Calu3 (cell line): ENCODE measurements at regions of chr6 and their contacts with region 1.

Region 1: DNA sequence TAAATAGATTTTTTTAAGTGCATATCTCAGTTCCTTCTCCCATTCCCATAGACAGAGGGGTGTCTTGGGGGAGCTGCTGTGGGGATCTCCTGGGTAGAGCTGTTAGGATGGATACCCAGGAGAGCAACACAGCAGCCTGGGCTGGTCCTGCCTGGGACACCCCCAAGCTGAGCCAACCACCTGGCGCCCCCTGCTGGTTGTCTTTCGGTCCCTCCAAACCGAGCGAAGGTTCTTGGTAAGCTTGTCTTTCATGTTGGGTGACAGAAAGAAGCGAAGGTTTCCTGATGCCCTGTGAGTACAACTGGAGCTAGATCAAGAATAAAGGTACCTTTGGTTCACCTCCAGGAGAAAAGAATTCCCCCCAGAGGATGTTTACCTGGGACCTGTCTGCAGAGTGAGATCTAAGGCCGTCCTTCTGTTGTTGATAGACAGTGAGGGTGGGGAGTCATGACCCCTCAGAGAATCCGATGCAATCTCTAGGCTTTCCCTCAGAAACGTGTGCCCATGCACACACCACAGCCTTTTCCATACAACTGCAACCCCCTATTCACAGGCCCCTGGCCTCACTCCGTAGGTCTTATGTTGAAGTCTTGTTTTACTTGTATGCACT is 50.8 kb downstream of the SNX9 start:
- DNase-seq: peak; percentile 85
- H3K4me3 Mint-ChIP-seq: no peak overlapping the region
- H3K27ac Mint-ChIP-seq: no peak overlapping the region
- H3K4me1 Mint-ChIP-seq: no peaks in the 10 kb centered on the region
- H3K27me3 Mint-ChIP-seq: no peaks in the 10 kb centered on the region
- CTCF ChIP-seq: peak; percentile 73

Region 2: GRCh38 chr6:157379656-157380454 is 494.0 kb before region 1 on chr6:
- CTCF ChIA-PET with region 1: no interaction called
- intact Hi-C with region 1: no loop called
- DNase-seq: peak; percentile 83
- H3K4me3 Mint-ChIP-seq: peak overlapping the region; percentile 80
- H3K27ac Mint-ChIP-seq: peak overlapping the region; percentile 69
- H3K4me1 Mint-ChIP-seq: peaks cover 20% of the 10 kb centered on the region
- H3K27me3 Mint-ChIP-seq: no peaks in the 10 kb centered on the region
- CTCF ChIP-seq: no peak

Region 3: DNA sequence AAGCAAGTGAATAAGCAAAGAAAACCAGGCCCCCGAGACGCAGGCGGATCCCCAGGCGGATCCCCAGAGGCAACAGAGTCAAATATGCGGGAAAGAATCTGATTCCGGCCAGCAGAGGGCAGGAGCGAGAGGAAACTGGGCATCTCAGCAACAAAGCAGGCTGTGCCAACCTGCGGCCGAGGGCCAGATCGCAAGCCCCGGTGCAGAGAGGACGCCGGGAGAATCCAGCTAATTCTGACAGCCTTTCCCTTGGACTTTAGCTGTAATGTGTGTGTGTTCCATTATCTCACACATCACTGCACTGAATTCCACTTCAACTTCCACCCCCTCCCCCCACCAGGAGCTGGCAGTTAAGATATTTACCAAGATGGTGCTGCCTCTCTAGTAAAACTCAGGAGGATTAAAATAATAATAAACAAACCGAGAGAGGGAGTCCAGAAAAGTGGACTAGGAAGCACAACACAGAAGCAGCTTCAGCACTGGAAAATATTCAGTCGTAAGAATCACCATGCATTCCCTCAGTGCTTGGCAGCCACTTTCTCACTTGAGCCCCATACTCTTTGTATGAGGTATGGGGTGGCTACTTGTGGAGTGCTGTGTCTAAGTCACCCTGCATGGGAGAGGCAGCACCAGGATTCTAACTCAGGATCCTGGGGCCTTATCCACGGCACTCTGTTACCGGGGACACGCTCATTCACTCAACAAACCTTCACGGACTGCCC is 117.0 kb before region 1 on chr6:
- CTCF ChIA-PET with region 1: interaction called, 14 read pairs
- intact Hi-C with region 1: loop called (anchors 5 kb)
- DNase-seq: peak; percentile 80
- H3K4me3 Mint-ChIP-seq: no peak overlapping the region
- H3K27ac Mint-ChIP-seq: no peak overlapping the region
- H3K4me1 Mint-ChIP-seq: peaks cover 35% of the 10 kb centered on the region
- H3K27me3 Mint-ChIP-seq: no peaks in the 10 kb centered on the region
- CTCF ChIP-seq: peak; percentile 63

Region 4: DNA sequence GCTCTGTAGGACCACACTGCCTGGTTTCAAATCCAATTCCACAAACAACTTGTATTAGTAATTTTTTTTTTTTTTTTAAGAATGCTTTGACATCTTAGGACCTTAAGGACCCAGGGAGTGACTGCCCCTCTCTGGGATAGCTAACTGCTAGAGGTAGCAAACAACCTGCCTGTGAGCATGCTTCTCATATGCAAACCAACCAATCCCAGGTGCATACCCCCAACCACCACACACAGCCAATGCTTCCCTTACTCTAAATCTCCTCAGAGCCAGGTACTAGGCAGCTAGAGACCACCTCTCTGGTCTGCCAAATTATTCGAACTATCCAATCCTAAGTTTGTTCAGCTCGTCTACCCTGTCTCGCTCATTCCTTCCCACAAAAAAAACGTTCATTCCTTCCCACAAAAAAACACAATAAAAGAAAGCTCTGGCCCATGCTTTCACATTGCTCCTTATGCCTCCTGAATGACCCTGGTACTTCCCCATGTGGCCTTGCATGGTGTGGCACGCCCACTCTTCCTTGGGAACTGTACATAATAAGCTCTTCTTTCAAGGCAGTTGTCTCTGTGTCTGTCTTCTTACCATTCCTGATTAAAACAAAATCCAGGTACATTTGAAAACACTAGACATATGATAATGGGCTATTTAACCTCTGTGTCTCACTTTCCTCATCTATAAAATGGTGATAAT is 287.9 kb after region 1 on chr6:
- CTCF ChIA-PET with region 1: no interaction called
- intact Hi-C with region 1: no loop called
- DNase-seq: no peak
- H3K4me3 Mint-ChIP-seq: no peak overlapping the region
- H3K27ac Mint-ChIP-seq: no peak overlapping the region
- H3K4me1 Mint-ChIP-seq: peaks cover 26% of the 10 kb centered on the region
- H3K27me3 Mint-ChIP-seq: no peaks in the 10 kb centered on the region
- CTCF ChIP-seq: no peak